Activated CD8-positive, alpha-beta T cell treated with anti-CD3 and anti-CD28 coated beads for 36 hours (primary cell): ENCODE measurements at regions of chr2 and their contacts with region 1.

Region 1: DNA sequence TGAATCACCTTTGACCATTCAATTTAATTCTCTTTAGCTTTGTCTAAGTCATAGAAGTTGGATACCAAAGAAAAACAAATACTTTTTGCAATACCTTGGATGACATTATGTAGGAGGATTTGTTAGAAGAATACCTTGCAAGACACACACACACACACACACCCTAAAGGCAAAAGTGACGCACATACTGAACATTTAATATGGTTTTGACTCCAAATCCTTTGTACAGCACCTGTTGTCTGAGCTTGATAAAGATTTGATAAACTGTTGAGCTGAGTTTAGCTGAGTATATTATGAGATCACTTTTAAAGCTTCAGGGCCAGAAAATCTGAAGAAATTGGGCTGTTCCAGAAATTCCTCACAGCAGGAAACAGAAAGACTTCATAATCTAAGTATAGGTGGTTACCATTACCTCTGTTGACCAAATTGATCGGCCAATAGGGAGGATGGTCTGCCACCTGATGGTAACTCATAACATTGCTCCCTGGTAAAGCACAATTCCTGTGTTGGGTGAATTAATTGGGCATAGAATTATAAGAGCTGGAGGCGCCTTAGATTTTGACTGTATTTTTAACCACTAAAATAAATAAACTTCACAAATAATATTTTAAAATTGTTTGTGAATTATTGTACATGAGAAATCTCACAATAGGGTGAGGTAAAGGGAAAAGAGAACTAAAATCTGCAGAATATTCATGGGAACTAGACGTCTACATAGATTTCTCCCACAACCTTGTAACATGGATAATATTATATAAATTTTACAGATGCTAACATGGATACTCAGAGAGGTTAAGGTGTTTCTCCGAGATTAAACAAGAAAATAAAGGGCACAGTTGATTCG is 21.9 kb upstream of the RPIA start:
- DNase-seq: peak; percentile 56
- ATAC-seq: peak; percentile 95
- H3K4me3 Mint-ChIP-seq: no peak overlapping the region
- H3K27ac Mint-ChIP-seq: no peak overlapping the region
- H3K4me1 Mint-ChIP-seq: no peaks in the 10 kb centered on the region
- H3K27me3 Mint-ChIP-seq: no peaks in the 10 kb centered on the region
- CTCF ChIP-seq: peak; percentile 73

Region 2: DNA sequence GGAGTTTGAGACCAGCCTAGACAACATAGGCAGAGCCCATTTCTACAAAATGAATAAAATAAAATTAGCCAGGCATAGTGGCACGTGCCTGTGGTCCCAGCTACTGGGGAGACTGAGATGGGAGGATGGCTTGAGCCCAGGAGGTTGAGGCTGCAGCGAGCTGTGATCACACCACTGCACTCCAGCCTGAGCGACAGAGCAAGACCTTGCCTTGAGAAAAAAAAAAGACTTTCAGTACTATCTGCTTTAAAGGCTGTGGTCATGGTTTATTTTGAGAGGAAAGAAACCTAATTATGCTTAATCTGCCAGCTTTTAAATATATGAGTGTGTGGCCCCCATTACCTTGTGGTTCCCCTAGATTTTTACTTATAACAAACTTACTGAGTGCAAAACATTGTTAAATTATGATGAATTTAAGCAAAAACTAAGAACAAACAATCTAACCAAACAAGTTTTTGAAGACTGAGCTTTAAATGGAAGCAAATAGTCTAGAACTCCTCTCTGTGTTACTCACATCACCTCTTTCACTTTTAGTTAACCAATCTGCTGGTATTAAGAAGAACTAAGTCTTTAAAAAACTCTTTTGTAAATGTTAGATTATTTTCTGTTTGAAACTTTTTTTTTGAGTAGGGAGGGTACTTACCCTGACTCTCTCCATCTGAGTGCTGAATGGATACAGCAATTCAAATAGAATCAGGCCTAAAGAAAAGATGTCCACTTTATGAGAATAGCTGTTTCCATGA is 107.8 kb before region 1 on chr2:
- CTCF ChIA-PET with region 1: interaction called, 10 read pairs
- POLR2A ChIA-PET with region 1: interaction called, 3 read pairs
- intact Hi-C with region 1: no loop called
- DNase-seq: no peak
- ATAC-seq: no peak
- H3K4me3 Mint-ChIP-seq: no peak overlapping the region
- H3K27ac Mint-ChIP-seq: no peak overlapping the region
- H3K4me1 Mint-ChIP-seq: peaks cover 5% of the 10 kb centered on the region
- H3K27me3 Mint-ChIP-seq: no peaks in the 10 kb centered on the region
- CTCF ChIP-seq: no peak

Region 3: DNA sequence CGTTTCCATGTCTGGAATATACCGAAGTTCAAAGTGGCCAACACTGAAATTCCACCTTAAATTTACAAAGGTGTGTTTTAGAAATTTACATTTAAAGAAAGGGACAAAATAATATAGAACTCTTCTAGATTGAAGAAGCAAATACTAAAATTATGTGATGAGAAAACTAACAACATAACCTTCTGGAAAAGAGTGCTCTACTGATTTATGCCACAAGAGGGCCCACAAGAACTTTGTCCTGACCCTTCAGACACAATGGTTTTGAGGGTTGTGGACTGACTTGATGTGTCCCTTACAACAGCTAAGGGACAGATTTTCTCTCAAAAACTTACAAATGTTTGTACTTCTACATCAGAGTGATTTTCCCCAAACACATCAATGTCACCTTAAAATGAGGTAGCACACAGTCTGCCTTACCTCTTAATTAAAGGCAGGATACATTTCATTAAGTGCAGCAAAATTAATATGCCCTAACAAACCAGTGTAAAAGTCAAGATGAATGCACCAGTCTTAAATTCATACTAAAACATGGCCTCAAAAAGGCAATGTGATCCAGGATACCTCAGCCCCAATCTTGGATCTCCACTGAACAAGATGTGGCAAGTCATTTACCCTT is 78.5 kb before region 1 on chr2:
- CTCF ChIA-PET with region 1: interaction called, 191 read pairs
- POLR2A ChIA-PET with region 1: no interaction called
- intact Hi-C with region 1: loop called (anchors 1 kb)
- DNase-seq: peak; percentile 59
- ATAC-seq: peak; percentile 83
- H3K4me3 Mint-ChIP-seq: no peak overlapping the region
- H3K27ac Mint-ChIP-seq: peak overlapping the region; percentile 5
- H3K4me1 Mint-ChIP-seq: peaks cover 3% of the 10 kb centered on the region
- H3K27me3 Mint-ChIP-seq: no peaks in the 10 kb centered on the region
- CTCF ChIP-seq: peak; percentile 73

Region 4: GRCh38 chr2:88606371-88607030 is 63.1 kb before region 1 on chr2:
- CTCF ChIA-PET with region 1: interaction called, 11 read pairs
- POLR2A ChIA-PET with region 1: no interaction called
- intact Hi-C with region 1: no loop called
- DNase-seq: no peak
- ATAC-seq: no peak
- H3K4me3 Mint-ChIP-seq: no peak overlapping the region
- H3K27ac Mint-ChIP-seq: no peak overlapping the region
- H3K4me1 Mint-ChIP-seq: peaks cover 15% of the 10 kb centered on the region
- H3K27me3 Mint-ChIP-seq: no peaks in the 10 kb centered on the region
- CTCF ChIP-seq: no peak

Region 5: DNA sequence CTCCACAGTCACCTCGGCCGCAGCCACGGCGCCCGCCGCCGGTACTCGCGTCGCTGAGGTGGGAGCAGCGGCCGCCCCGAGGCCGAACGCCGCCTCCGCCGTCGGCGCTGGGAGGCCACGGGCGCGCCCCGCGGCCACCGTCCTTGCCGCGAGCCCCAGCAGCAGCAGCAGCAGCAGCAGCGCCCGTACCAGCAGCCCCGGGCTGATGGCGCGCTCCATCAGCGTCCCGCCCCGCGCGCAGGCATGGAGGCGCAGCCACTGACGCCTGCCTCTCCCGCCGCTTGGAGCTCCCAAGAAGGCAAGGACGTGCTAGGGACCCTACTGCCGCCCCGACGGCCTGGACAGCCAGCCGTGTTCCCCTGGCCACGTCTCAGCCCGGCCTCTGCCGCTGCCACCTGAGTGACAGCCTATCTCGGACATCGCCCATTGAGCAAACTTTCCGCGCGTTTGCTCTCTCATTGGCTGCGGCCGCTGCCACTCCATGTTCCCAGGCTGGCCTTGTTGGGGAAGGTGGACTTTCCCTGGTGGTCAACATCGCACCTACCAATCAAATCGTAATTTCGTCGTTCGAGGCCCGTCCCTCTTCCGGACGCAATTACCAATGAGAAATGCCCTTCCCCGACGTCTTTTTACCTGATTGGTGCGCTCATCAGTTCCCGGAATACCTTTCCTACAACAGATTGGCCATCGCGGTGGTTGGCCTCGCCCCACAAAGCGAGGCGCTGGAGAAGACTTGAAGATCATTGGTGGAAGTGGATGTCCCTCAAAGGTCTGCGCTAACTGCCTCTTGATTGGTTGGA is 42.3 kb before region 1 on chr2 and contains the start of gene EIF2AK3:
- CTCF ChIA-PET with region 1: interaction called, 20 read pairs
- POLR2A ChIA-PET with region 1: interaction called, 4 read pairs
- intact Hi-C with region 1: no loop called
- DNase-seq: peak; percentile 97
- ATAC-seq: peak; percentile 88
- H3K4me3 Mint-ChIP-seq: peak within 1 kb of the TSS; percentile 92
- H3K27ac Mint-ChIP-seq: peak within 1 kb of the TSS; percentile 94
- H3K4me1 Mint-ChIP-seq: peaks cover 6% of the 10 kb centered on the region
- H3K27me3 Mint-ChIP-seq: no peaks in the 10 kb centered on the region
- CTCF ChIP-seq: no peak
- total RNA-seq, gene EIF2AK3: 14.9 to 17.4 TPM

Region 6: DNA sequence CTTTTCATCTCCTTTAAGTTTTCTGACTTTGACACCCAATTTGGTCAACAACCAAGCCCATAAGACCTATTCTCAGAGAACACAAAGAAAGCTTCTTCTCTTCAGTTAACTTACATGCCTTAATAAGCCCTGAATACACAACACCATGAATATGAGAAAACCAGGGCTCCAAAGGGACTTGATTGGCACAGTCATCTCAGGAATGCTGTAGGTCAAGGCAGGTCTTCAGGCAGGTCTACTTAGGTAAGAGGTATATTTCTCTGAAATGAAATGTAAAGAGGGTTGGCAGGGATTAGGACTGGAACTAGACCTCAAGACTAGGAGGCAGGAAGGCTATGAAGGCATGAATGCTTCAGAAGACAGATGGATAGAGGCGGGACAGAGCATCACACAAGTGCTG is 17.9 kb before region 1 on chr2:
- CTCF ChIA-PET with region 1: interaction called, 40 read pairs
- POLR2A ChIA-PET with region 1: no interaction called
- intact Hi-C with region 1: no loop called
- DNase-seq: no peak
- ATAC-seq: no peak
- H3K4me3 Mint-ChIP-seq: no peak overlapping the region
- H3K27ac Mint-ChIP-seq: no peak overlapping the region
- H3K4me1 Mint-ChIP-seq: no peaks in the 10 kb centered on the region
- H3K27me3 Mint-ChIP-seq: no peaks in the 10 kb centered on the region
- CTCF ChIP-seq: no peak

Region 7: DNA sequence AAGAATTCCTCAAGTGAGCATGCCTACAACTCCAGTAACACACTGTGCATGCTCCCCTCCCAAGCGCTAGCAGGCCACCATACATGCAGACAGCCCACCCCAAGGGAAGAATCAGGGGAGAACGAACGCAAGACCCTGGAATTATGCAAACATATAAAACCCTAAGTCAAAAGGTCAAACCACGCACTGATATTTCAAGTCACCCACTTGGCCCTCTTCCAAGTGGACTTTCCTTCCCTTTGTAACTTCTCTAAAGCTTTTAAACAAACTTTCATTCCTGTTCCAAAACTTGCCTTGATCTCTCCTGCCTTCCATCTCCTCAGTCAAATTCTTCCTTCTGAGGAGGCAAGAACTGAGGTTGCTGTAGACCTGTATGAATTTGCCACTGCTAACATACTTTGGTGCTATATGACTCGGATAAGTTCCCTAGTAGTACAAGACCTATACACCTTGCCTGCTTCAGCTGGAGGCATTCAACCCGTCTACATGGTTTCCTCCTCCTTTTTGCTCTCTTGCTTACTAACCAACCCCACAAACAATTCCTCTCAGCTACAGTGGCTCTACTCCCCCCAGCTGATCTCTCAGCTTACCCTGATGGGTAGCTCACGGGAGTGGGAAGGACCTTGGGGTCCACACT is 10.8 kb after region 1 on chr2:
- CTCF ChIA-PET with region 1: interaction called, 20 read pairs
- POLR2A ChIA-PET with region 1: no interaction called
- intact Hi-C with region 1: no loop called
- DNase-seq: no peak
- ATAC-seq: no peak
- H3K4me3 Mint-ChIP-seq: no peak overlapping the region
- H3K27ac Mint-ChIP-seq: no peak overlapping the region
- H3K4me1 Mint-ChIP-seq: no peaks in the 10 kb centered on the region
- H3K27me3 Mint-ChIP-seq: peaks cover 2% of the 10 kb centered on the region
- CTCF ChIP-seq: no peak